ENCODE measurements at regions of chr13 and their contacts with region 1.

Region 1: GRCh38 chr13:43878892-43879754 is at the start of gene CCDC122:
- DNase-seq: peak; percentile 84 to 93 (median 91)
- ATAC-seq: peak; percentile 93
- H3K4me3 ChIP-seq: peak within 1 kb of the TSS; percentile 83
- H3K4me1 ChIP-seq: peaks cover 9% of the 10 kb centered on the region
- CTCF ChIP-seq: no peak
- total RNA-seq, gene CCDC122: 8.0 to 17.1 (median 10.9) TPM

Region 2: GRCh38 chr13:42985312-42986175 is 893.6 kb before region 1 on chr13:
- intact Hi-C with region 1: loop called in 1 of 2 experiments (anchors 10 kb)
- DNase-seq: peak; percentile 71 to 91 (median 78)
- ATAC-seq: peak; percentile 93
- H3K4me3 ChIP-seq: no peak overlapping the region
- H3K4me1 ChIP-seq: peaks cover 19% of the 10 kb centered on the region
- CTCF ChIP-seq: no peak

Region 3: GRCh38 chr13:43652760-43653159 is 226.4 kb before region 1 on chr13:
- intact Hi-C with region 1: no loop called
- DNase-seq: no peak
- ATAC-seq: no peak
- H3K4me3 ChIP-seq: no peak overlapping the region
- H3K4me1 ChIP-seq: no peaks in the 10 kb centered on the region
- CTCF ChIP-seq: no peak

Measured in mucosa of descending colon (tissue), 3 donors.